Activated CD8-positive, alpha-beta memory T cell treated with anti-CD3 and anti-CD28 coated beads, Interleukin-2, amount 10 ng/mL, durations not matched to agents 7 days and 5 days (primary cell): ENCODE measurements at regions of chr17 and their contacts with region 1.

Region 1: GRCh38 chr17:78818932-78819331 is 21.7 kb downstream of the USP36 start:
- DNase-seq: peak; percentile 79
- ATAC-seq: peak; percentile 60
- H3K4me3 Mint-ChIP-seq: peak overlapping the region; percentile 38
- H3K27ac Mint-ChIP-seq: peak overlapping the region; percentile 91
- H3K4me1 Mint-ChIP-seq: peaks cover 57% of the 10 kb centered on the region
- H3K27me3 Mint-ChIP-seq: no peaks in the 10 kb centered on the region

Region 2: DNA sequence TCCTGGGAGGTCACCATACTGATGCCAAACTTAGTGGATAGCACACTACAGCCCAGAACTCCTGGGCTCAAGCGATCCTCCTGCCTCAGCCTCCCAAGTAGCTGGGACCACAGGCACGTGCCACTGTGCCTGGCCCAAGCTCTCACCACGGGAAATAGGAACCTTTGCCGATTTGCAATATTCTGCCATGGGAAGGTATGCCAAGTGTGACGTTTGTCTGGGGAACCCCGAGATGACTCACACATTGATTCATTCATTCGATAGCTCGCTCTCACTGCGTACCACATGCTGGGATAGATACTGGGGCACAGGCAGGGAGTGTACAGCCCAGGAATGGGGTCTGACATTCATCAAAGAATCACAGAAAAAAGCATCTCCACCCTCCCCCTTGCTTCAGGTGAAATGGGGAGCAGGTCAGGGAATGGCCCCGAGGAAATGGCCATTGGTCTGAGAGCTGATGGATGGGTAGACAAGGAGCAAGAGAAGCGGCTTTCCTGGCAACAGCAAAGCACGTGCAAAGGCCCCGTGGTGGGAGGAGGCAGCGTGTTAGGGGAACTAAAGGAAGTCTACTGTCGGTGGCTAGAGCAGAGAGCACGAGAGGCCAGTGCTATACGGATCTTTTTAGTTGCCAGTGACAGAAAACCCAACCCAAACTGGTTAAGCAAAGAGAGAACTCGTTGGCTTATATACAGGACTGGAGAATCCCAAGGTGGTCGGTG is 285.9 kb before region 1 on chr17:
- CTCF ChIA-PET with region 1: no interaction called
- DNase-seq: no peak
- ATAC-seq: no peak
- H3K4me3 Mint-ChIP-seq: no peak overlapping the region
- H3K27ac Mint-ChIP-seq: no peak overlapping the region
- H3K4me1 Mint-ChIP-seq: peaks cover 23% of the 10 kb centered on the region
- H3K27me3 Mint-ChIP-seq: peaks cover under 1% of the 10 kb centered on the region

Region 3: DNA sequence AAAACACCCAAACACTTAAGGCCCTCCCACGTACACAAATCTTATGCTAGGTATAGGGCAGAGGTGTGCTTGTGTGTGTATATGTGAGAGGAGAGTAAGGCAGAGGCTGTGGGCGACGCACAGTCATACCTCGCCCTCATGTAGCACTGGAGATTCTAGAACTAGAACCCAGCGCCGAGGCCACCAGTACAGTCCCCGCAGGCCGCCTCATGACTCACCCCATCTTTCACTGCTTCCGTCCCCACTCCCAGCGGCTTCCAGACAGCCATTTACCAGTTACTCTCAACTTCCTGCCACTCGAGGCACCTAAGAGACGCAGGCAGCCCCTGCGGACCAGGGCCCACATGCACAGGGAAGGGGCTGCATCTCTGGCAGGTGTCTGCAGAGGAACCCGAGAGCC is 13.6 kb before region 1 on chr17:
- CTCF ChIA-PET with region 1: interaction called, 12 read pairs
- DNase-seq: peak; percentile 91
- ATAC-seq: peak; percentile 96
- H3K4me3 Mint-ChIP-seq: no peak overlapping the region
- H3K27ac Mint-ChIP-seq: peak overlapping the region; percentile 88
- H3K4me1 Mint-ChIP-seq: peaks cover 52% of the 10 kb centered on the region
- H3K27me3 Mint-ChIP-seq: no peaks in the 10 kb centered on the region